ENCODE measurements at regions of chr15 and their contacts with region 1.

Region 1: DNA sequence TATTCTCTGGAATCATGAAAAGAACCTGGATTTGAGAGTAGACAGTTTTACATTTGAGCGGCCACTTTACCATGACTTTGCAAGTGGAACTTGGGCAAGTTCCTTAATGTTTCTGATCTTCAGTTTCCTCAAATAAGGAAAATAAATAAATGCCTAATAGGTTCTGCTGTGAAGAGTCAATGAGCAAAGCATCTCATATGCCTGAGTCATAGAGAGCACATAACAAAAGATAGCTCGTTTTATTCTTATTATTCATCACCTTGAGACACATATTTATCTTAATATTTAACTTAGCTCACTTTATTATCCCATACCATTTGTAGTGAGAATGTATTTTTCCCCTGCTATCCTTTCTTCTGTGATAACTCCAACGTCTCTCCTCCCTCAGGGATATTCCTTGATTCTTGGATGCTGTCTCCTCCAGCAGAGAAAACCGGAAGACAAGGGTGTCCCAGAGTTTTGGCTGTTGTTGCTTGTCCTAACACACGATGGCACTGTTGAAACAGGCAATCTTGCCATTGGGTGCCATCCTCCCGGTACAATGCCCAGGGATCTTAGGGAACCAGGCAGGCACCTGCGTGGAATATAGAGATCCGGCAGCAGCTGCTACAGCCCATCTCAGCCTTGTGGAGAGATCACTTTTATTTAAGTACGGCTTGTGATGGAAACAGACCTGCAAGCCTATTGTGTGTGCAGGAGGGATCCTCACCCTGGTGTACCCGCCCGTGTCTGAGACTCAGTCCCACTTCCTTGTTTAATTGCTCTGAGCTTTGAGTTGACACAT is 33.3 kb upstream of the VPS33B start:
- DNase-seq: peak; percentile 86
- H3K4me3 Mint-ChIP-seq: no peak overlapping the region
- H3K27ac Mint-ChIP-seq: no peak overlapping the region
- H3K4me1 Mint-ChIP-seq: no peaks in the 10 kb centered on the region
- H3K27me3 Mint-ChIP-seq: peaks cover 59% of the 10 kb centered on the region
- CTCF ChIP-seq: peak; percentile 78

Region 2: GRCh38 chr15:91068966-91069365 is 13.2 kb after region 1 on chr15:
- CTCF ChIA-PET with region 1: interaction called, 20 read pairs
- POLR2A ChIA-PET with region 1: interaction called, 5 read pairs
- intact Hi-C with region 1: no loop called
- DNase-seq: no peak
- H3K4me3 Mint-ChIP-seq: no peak overlapping the region
- H3K27ac Mint-ChIP-seq: no peak overlapping the region
- H3K4me1 Mint-ChIP-seq: peaks cover 23% of the 10 kb centered on the region
- H3K27me3 Mint-ChIP-seq: no peaks in the 10 kb centered on the region
- CTCF ChIP-seq: no peak

Region 3: DNA sequence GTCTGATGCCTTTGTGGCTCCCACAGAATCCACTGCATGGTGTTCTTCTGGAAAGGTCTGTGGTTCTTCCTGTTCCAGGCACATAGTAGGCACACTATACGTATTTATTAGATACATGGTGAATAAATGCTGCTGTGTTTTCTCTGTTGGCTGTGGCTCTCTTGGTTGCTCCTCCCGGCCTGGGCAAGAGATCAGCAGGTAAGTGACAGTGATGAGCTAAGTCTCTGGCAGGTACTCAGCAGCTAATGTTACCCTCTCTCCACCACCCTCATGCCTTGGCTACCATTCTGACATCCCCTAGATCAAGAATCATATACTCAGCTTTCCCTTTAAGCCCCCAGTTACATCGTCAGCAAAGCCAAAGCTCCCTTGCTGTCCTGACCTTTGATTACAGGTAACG is 52.7 kb after region 1 on chr15:
- CTCF ChIA-PET with region 1: no interaction called
- POLR2A ChIA-PET with region 1: no interaction called
- intact Hi-C with region 1: no loop called
- DNase-seq: no peak
- H3K4me3 Mint-ChIP-seq: no peak overlapping the region
- H3K27ac Mint-ChIP-seq: no peak overlapping the region
- H3K4me1 Mint-ChIP-seq: no peaks in the 10 kb centered on the region
- H3K27me3 Mint-ChIP-seq: peaks cover 38% of the 10 kb centered on the region
- CTCF ChIP-seq: no peak

Region 4: DNA sequence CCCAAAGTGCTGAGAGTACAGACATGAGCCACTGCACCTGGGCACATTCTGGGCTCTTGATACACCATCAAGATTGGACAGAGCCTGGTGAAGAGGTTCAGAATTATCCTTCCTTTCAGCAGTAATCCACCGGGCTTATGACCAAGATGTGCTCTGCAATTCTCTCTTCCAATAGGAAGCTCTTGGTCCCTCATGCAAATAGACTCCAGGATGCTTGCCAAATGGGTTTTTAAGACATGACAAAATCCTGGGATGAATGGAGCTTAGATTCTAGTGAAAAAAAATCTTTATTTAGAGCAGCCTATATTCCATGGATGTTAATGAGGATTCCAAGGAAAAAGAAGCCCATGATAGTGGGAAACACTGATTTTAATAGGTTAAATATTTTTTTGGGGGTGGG is 163.5 kb after region 1 on chr15:
- CTCF ChIA-PET with region 1: interaction called, 109 read pairs
- POLR2A ChIA-PET with region 1: interaction called, 4 read pairs
- intact Hi-C with region 1: loop called (anchors 1 kb)
- DNase-seq: no peak
- H3K4me3 Mint-ChIP-seq: no peak overlapping the region
- H3K27ac Mint-ChIP-seq: no peak overlapping the region
- H3K4me1 Mint-ChIP-seq: no peaks in the 10 kb centered on the region
- H3K27me3 Mint-ChIP-seq: peaks cover 45% of the 10 kb centered on the region
- CTCF ChIP-seq: no peak

Region 5: GRCh38 chr15:91231703-91232372 is 176.1 kb after region 1 on chr15:
- CTCF ChIA-PET with region 1: interaction called, 109 read pairs
- POLR2A ChIA-PET with region 1: interaction called, 3 read pairs
- intact Hi-C with region 1: no loop called
- DNase-seq: no peak
- H3K4me3 Mint-ChIP-seq: no peak overlapping the region
- H3K27ac Mint-ChIP-seq: no peak overlapping the region
- H3K4me1 Mint-ChIP-seq: no peaks in the 10 kb centered on the region
- H3K27me3 Mint-ChIP-seq: peaks cover 61% of the 10 kb centered on the region
- CTCF ChIP-seq: no peak

Region 6: GRCh38 chr15:91258425-91258779 is 202.7 kb after region 1 on chr15:
- CTCF ChIA-PET with region 1: interaction called, 18 read pairs
- POLR2A ChIA-PET with region 1: interaction called, 3 read pairs
- intact Hi-C with region 1: no loop called
- DNase-seq: peak; percentile 18
- H3K4me3 Mint-ChIP-seq: no peak overlapping the region
- H3K27ac Mint-ChIP-seq: no peak overlapping the region
- H3K4me1 Mint-ChIP-seq: no peaks in the 10 kb centered on the region
- H3K27me3 Mint-ChIP-seq: peaks cover 23% of the 10 kb centered on the region
- CTCF ChIP-seq: no peak

Region 7: GRCh38 chr15:91271565-91272153 is 215.9 kb after region 1 on chr15:
- CTCF ChIA-PET with region 1: interaction called, 82 read pairs
- POLR2A ChIA-PET with region 1: interaction called, 22 read pairs
- intact Hi-C with region 1: loop called (anchors 1 kb)
- DNase-seq: peak; percentile 69
- H3K4me3 Mint-ChIP-seq: no peak overlapping the region
- H3K27ac Mint-ChIP-seq: no peak overlapping the region
- H3K4me1 Mint-ChIP-seq: peaks cover 9% of the 10 kb centered on the region
- H3K27me3 Mint-ChIP-seq: peaks cover 44% of the 10 kb centered on the region
- CTCF ChIP-seq: peak; percentile 85

Measured in MCF 10A (cell line).